Dorsolateral prefrontal cortex (tissue), 120 donors: ENCODE measurements at regions of chr11 and their contacts with region 1.

Region 1: GRCh38 chr11:46489661-46490560 is 98.3 kb upstream of the CHRM4 start:
- DNase-seq: peak in 2 of 10 donors; percentile 42 to 47
- H3K4me3 ChIP-seq: no peak overlapping the region
- H3K27ac ChIP-seq: no peak overlapping the region
- H3K27me3 ChIP-seq: no peaks in the 10 kb centered on the region
- CTCF ChIP-seq: peak in 55 of 56 donors; percentile 14 to 74 (median 56)

Region 2: DNA sequence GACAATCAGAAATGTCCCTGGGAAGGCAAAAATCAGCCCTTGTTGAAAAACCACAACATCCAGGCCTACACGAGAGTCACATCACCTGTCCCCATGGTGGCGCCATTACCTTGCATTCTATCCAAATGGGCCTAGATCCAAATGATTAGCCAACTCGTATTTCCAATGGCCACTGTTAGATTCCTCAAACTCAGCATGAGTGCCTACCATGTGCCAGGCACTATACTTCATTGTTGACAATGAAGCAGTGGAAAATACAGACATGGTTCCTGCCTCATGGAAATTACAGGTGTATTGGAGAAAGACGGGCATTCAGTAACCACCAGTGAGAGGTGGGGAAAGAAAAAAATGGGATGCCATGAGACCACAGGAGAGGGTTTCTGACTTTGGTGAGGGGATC is 242.2 kb before region 1 on chr11:
- intact Hi-C with region 1: no loop called
- DNase-seq: no peak
- H3K4me3 ChIP-seq: no peak overlapping the region
- H3K27ac ChIP-seq: no peak overlapping the region
- H3K27me3 ChIP-seq: no peaks in the 10 kb centered on the region
- CTCF ChIP-seq: no peak

Region 3: DNA sequence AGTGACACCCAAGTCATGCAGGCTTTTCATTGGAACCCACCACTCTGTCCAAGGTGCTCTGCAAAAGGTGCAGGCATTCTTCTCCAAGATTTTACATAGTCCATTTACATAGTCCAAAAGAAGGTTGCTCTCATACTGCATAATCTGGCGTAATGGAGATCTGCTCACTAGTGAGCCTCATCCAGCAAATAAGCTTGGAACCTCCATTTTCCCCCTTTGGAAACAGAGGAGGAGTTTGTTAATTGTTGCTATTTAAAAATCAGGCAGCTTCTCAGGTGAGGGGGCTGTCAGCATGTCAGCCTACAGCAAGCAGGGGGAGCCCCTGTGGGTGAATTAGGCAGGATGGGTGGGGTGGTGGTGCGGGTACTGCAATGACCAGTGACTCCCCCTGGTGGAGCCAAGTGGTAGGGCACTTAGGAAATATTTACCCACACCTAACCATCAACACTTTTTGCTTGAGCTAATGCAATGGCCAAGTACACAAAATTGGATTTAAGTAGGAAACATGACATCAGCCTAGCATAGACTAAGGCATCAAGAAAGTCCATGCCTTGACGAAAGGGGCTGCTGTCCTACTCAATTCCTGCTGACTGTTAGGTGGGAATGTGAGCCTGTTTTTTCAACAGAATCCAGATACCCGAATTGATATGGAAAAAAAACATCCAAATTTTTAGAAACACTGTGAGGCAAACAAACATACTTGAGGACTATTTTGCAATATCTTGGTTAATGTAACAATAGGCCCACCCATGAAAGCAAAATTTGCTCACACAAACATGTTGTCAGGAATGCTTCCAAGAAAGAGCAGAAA is 39.4 kb after region 1 on chr11:
- intact Hi-C with region 1: loop called in 1 of 2 experiments (anchors 5 kb)
- DNase-seq: peak in 7 of 10 donors; percentile 45 to 63 (median 52)
- H3K4me3 ChIP-seq: no peak overlapping the region
- H3K27ac ChIP-seq: peak overlapping the region in 12 of 59 donors; percentile 1 to 30 (median 20)
- H3K27me3 ChIP-seq: no peaks in the 10 kb centered on the region
- CTCF ChIP-seq: peak; percentile 71 to 94 (median 88)

Region 4: DNA sequence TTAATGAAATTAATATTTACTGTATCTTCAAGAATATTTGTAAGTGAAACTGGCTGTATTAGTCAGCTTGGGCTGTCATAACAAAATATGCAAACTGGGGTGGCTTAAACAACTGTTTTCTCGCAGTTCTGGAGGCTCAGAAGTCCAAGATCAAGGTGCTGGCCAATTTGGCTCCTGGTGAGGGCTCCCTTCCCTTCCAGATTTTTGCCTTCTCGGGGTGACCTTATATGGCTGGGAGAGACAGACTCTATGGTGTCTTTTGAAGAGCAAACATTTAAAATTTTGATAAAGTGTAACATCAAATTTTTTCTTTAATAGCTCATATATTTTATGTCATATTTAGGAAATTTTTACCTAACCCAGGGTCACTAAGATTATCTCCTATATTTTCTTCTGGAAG is 476.9 kb after region 1 on chr11:
- intact Hi-C with region 1: no loop called
- DNase-seq: no peak
- H3K4me3 ChIP-seq: no peak overlapping the region
- H3K27ac ChIP-seq: peak overlapping the region in 13 of 59 donors; percentile 7 to 91 (median 33)
- H3K27me3 ChIP-seq: no peaks in the 10 kb centered on the region
- CTCF ChIP-seq: peak in 4 of 56 donors; percentile 7 to 18 (median 12)